Gastrocnemius medialis (tissue), 4 donors: ENCODE measurements at regions of chr6 and their contacts with region 1.

Region 1: GRCh38 chr6:29016559-29017427 is 11.7 kb upstream of the ZNF311 start:
- DNase-seq: peak; percentile 29 to 59
- ATAC-seq: peak; percentile 79 to 81
- H3K4me3 ChIP-seq: peak overlapping the region; percentile 40 to 56 (median 46)
- H3K27ac ChIP-seq: no peak overlapping the region
- H3K4me1 ChIP-seq: peaks cover 0 to 9% of the 10 kb centered on the region in 2 donors
- H3K27me3 ChIP-seq: peaks cover 34 to 49% (median 40%) of the 10 kb centered on the region in 3 donors
- CTCF ChIP-seq: peak; percentile 49 to 83 (median 79)
- POLR2A ChIP-seq: no peak

Region 2: DNA sequence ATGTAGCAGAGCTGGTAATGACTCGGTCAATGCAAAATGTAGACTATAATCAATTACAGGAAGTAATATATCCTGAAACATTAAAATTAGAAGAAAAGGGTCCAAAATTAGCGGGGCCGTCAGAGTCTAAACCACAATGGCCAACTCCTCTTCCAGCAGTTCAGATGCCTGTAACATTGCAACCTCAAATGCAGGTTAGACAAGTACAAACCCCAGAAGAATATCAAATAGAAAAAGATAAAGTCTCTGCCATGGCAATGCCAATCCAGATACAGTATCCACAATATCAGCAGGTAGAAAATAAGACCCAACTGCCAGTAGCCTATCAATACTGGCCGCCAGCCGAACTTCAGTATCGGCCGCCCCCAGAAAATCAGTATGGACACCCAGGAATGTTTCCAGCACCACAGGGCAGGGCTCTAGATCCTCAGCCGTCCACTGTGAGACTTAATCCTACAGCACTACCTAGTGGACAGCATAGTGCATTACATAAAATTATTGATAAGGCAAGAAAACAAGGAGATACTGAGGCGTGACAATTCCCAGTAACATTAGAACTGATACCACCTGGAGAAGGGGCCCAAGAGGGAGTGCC is 332.8 kb before region 1 on chr6:
- in situ Hi-C with region 1: loop called in 3 of 4 experiments (anchors 5 kb)
- intact Hi-C with region 1: loop called (anchors 1 kb)
- DNase-seq: no peak
- ATAC-seq: no peak
- H3K4me3 ChIP-seq: no peak overlapping the region
- H3K27ac ChIP-seq: no peak overlapping the region
- H3K4me1 ChIP-seq: no peaks in the 10 kb centered on the region
- H3K27me3 ChIP-seq: peaks cover 4 to 23% (median 7%) of the 10 kb centered on the region in 3 donors
- CTCF ChIP-seq: peak in 2 of 5 experiments; percentile 10 to 33
- POLR2A ChIP-seq: no peak

Region 3: GRCh38 chr6:28695715-28696114 is 321.1 kb before region 1 on chr6:
- in situ Hi-C with region 1: loop called in 1 of 4 experiments (anchors 10 kb)
- intact Hi-C with region 1: no loop called
- DNase-seq: no peak
- ATAC-seq: no peak
- H3K4me3 ChIP-seq: no peak overlapping the region
- H3K27ac ChIP-seq: no peak overlapping the region
- H3K4me1 ChIP-seq: no peaks in the 10 kb centered on the region
- H3K27me3 ChIP-seq: peaks cover 26 to 69% (median 37%) of the 10 kb centered on the region in 3 donors
- CTCF ChIP-seq: no peak
- POLR2A ChIP-seq: no peak

Region 4: DNA sequence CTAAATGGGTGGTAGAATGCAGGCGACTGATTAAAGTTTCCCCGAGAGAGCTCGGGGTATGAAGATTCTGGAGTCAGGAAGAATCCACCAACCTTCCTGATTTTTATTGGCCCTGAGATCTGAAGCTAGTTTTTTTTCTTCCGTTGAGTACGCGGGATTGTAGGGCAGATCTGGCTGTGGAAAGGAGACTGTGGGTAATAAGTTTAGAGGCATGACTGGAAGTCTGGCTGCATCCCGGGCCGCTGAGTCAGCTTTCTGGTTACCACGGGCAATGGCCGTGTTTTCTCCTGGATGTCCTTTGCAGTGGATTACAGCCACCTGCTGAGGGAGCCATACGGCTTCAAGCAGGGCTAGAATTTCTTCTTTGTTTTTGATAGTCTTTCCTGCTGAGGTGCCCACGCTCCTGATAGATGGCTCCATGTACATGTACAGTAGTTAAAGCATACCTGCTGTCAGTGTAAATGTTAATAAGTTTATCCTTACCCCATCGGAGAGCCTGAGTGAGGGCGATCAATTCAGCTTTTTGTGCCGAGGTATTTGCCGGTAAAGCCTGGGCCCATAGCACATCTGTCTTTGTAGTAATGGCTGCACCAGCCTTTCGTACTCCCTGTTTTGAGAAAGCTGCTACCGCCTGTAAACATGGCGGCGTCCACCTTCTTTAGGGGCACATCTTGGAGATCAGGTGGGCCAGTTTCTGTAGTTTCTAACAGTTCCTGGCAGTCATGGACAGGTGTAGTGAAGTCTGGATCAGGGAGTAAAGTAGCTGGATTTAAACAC is 247.0 kb before region 1 on chr6:
- in situ Hi-C with region 1: no loop called
- intact Hi-C with region 1: no loop called
- DNase-seq: no peak
- ATAC-seq: no peak
- H3K4me3 ChIP-seq: no peak overlapping the region
- H3K27ac ChIP-seq: no peak overlapping the region
- H3K4me1 ChIP-seq: no peaks in the 10 kb centered on the region
- H3K27me3 ChIP-seq: peaks cover 89 to 97% (median 95%) of the 10 kb centered on the region in 3 donors
- CTCF ChIP-seq: no peak
- POLR2A ChIP-seq: no peak

Region 5: GRCh38 chr6:28865401-28866204 is 151.2 kb before region 1 on chr6:
- in situ Hi-C with region 1: no loop called
- intact Hi-C with region 1: no loop called
- DNase-seq: no peak
- ATAC-seq: no peak
- H3K4me3 ChIP-seq: peak overlapping the region in 1 of 4 donors; percentile 64
- H3K27ac ChIP-seq: no peak overlapping the region
- H3K4me1 ChIP-seq: peaks cover 0 to 19% of the 10 kb centered on the region in 2 donors
- H3K27me3 ChIP-seq: peaks cover 0 to 34% (median 3%) of the 10 kb centered on the region in 3 donors
- CTCF ChIP-seq: no peak
- POLR2A ChIP-seq: no peak

Region 6: DNA sequence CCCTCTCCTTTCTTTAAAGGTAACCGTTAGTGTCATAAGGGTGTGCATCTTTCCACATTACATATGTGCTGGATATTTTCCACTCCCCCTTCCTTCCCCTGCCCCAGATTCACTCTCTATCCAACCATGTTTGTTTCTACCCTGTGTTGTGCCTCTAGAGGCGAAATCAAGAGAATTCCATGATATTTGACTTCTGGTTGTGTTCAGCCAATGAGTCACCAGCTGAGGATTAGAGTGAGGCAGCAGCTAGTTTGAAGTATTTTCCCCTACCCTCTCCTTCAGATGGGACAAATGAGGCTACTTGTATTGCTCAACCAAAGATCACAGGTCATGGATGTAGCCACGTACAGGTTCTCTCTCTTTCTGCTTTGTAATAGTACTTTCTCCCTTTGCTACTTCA is 129.4 kb after region 1 on chr6:
- in situ Hi-C with region 1: no loop called
- intact Hi-C with region 1: no loop called
- DNase-seq: no peak
- ATAC-seq: no peak
- H3K4me3 ChIP-seq: no peak overlapping the region
- H3K27ac ChIP-seq: no peak overlapping the region
- H3K4me1 ChIP-seq: no peaks in the 10 kb centered on the region
- H3K27me3 ChIP-seq: no peaks in the 10 kb centered on the region
- CTCF ChIP-seq: no peak
- POLR2A ChIP-seq: no peak

Region 7: GRCh38 chr6:29319931-29320330 is 303.1 kb after region 1 on chr6:
- in situ Hi-C with region 1: no loop called
- intact Hi-C with region 1: no loop called
- DNase-seq: no peak
- ATAC-seq: no peak
- H3K4me3 ChIP-seq: no peak overlapping the region
- H3K27ac ChIP-seq: no peak overlapping the region
- H3K4me1 ChIP-seq: no peaks in the 10 kb centered on the region
- H3K27me3 ChIP-seq: no peaks in the 10 kb centered on the region
- CTCF ChIP-seq: no peak
- POLR2A ChIP-seq: no peak